Endothelial cell of umbilical vein (primary cell): ENCODE measurements at regions of chr1 and their contacts with region 1.

Region 1: GRCh38 chr1:46991083-46991923 is 32.2 kb upstream of the CYP4X1 start:
- DNase-seq: no peak
- H3K4me3 ChIP-seq: no peak overlapping the region
- H3K27ac ChIP-seq: no peak overlapping the region
- H3K4me1 ChIP-seq: no peaks in the 10 kb centered on the region
- H3K27me3 ChIP-seq: no peaks in the 10 kb centered on the region
- CTCF ChIP-seq: no peak
- POLR2A ChIP-seq: no peak

Region 2: DNA sequence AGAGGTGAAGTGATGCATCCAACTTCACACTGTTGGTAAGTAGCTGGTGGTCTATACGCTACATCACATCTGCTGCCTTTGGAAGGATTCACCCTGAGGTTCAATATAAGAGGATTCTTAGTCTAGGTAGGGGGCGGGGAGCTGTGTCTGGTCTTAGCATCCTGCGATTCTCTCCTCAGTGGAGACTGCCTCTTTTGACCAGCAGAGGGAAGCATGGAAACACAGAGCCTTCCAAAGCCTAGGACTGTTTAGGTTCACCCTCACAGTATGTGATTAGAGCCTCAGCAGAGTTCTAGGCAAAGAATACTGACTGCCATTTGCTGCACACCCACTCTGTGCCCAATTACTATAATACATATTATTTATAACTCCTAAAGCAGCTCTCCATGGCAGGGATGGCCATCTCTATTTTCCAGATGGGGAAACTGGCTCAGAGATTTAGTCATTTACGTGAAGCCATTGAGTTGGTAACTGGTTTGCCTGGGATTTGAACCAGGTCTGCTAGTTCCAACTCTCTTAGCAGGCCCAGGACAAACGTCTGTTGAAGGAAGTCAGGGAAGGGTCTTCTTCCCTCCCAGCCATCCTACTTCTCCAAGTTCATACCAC is 243.5 kb before region 1 on chr1:
- CTCF ChIA-PET with region 1: no interaction called
- POLR2A ChIA-PET with region 1: no interaction called
- dilution Hi-C with region 1: no loop called
- intact Hi-C with region 1: loop called (anchors 2 kb)
- DNase-seq: peak; percentile 63
- H3K4me3 ChIP-seq: no peak overlapping the region
- H3K27ac ChIP-seq: no peak overlapping the region
- H3K4me1 ChIP-seq: peaks cover 6% of the 10 kb centered on the region
- H3K27me3 ChIP-seq: peaks cover 12 to 18% of the 10 kb centered on the region in 2 experiments
- CTCF ChIP-seq: peak; percentile 49 to 73
- POLR2A ChIP-seq: no peak

Region 3: GRCh38 chr1:46820560-46821060 is 170.7 kb before region 1 on chr1:
- CTCF ChIA-PET with region 1: no interaction called
- POLR2A ChIA-PET with region 1: no interaction called
- dilution Hi-C with region 1: no loop called
- intact Hi-C with region 1: no loop called
- DNase-seq: no peak
- H3K4me3 ChIP-seq: no peak overlapping the region
- H3K27ac ChIP-seq: no peak overlapping the region
- H3K4me1 ChIP-seq: no peaks in the 10 kb centered on the region
- H3K27me3 ChIP-seq: no peaks in the 10 kb centered on the region
- CTCF ChIP-seq: no peak
- POLR2A ChIP-seq: no peak